A673 (cell line): ENCODE measurements at regions of chr15 and their contacts with region 1.

Region 1: DNA sequence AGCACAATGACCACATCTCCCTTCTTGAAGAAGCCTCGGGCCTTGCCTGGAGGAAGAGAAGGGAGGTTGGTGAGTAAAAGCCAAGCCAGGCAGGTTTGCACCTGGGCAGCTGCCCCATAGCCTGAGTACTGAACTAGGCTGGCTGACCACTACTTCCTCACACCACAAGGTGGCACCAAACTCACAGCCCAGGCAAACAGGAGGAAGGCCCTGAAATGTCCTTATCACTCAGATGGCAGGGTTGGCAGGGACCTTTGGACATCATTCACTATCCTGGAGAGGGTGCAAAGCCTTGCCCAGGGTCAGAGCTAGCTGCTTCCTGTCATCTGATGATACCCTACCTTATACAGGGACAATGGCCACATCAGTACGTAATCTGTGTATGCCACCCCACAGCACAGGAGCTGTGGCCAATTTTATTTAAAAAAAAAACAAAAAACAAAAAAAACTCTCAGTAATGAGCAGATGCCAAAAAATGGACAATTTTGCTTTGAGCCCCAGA is 2.2 kb upstream of the GRAMD2A start:
- DNase-seq: peak; percentile 77
- H3K4me3 ChIP-seq: no peak overlapping the region
- H3K27ac ChIP-seq: no peak overlapping the region
- H3K4me1 ChIP-seq: no peaks in the 10 kb centered on the region
- H3K27me3 ChIP-seq: no peaks in the 10 kb centered on the region
- CTCF ChIP-seq: peak; percentile 83

Region 2: GRCh38 chr15:72060687-72061250 is 139.0 kb before region 1 on chr15:
- CTCF ChIA-PET with region 1: no interaction called
- POLR2A ChIA-PET with region 1: no interaction called
- intact Hi-C with region 1: no loop called
- DNase-seq: no peak
- H3K4me3 ChIP-seq: no peak overlapping the region
- H3K27ac ChIP-seq: no peak overlapping the region
- H3K4me1 ChIP-seq: no peaks in the 10 kb centered on the region
- H3K27me3 ChIP-seq: no peaks in the 10 kb centered on the region
- CTCF ChIP-seq: no peak

Region 3: DNA sequence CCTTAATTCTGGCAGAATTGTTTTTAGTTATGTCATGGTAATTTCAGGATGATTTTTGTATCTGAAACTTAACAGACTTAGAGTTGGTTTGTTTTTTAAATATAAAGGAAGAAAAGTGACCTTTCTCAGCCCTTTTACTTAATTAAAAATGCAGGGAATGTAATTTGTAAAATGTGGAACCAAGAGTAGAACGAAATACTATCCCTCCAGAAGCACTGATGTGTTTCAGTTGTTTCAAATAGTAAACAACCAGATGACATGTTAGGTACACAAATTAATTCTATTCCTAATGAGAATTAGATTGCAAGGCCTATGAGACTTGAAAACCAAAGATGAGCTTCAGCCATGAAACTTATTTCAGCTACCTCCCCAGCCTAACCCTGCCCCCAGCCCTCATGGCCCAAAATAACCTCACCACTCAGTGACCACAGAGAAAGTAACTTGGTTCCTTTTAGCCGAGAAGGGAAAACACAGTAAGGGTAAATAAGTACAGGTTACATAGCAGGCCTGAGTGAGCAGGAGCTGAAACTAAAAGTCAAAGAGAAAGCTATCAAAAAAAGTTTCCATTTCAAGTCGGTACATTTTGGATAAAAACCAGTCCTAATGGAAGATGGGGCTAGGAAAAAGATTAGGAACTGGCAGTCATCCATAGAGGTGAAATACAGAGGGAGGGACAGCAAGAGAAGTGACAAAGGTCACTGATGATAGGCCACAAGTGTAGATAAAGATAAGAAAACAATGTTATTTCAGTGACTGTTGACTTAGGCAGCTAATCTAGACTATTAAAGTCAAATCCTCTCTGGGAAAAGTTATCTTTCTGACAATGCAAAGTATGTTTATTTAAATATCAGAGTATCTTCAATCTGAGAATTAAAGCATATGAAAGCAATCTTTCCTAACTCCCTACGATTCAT is 58.3 kb before region 1 on chr15:
- CTCF ChIA-PET with region 1: no interaction called
- POLR2A ChIA-PET with region 1: no interaction called
- intact Hi-C with region 1: no loop called
- DNase-seq: no peak
- H3K4me3 ChIP-seq: no peak overlapping the region
- H3K27ac ChIP-seq: no peak overlapping the region
- H3K4me1 ChIP-seq: no peaks in the 10 kb centered on the region
- H3K27me3 ChIP-seq: no peaks in the 10 kb centered on the region
- CTCF ChIP-seq: no peak

Region 4: DNA sequence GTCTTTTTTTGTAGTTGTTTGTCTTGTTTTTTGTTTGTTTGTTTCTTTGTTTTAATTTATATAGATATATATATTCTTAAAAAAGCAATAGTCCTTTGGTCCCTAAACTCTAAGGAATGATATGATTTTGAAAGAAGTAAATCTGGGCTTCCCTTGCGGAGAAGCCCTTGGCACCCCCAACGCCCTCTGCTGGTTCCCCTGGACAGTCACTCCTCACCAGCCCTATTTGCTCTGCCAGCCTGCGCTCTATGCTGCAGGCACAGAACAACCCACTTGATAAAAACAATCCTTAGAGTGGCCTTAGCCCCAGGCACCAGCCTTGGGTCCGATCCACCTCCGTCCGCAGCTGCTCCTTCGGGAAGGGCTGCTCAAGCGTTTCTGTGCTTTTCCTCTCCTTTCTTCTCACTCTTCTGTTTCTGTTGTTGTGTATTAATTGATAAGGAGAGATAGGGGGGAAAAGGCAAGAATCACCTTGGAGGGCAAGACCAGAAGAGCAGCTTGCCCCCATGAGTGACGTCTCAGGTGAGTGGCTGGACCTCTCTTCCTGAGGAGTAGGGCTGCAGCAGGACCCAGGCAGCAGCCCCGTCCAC is 86.3 kb after region 1 on chr15:
- CTCF ChIA-PET with region 1: no interaction called
- POLR2A ChIA-PET with region 1: no interaction called
- intact Hi-C with region 1: loop called (anchors 5 kb)
- DNase-seq: peak; percentile 52
- H3K4me3 ChIP-seq: no peak overlapping the region
- H3K27ac ChIP-seq: no peak overlapping the region
- H3K4me1 ChIP-seq: no peaks in the 10 kb centered on the region
- H3K27me3 ChIP-seq: no peaks in the 10 kb centered on the region
- CTCF ChIP-seq: peak; percentile 62